ENCODE measurements at regions of chr13 and their contacts with region 1.

Region 1: GRCh38 chr13:76903544-76904162 is 17.4 kb upstream of the KCTD12 start:
- DNase-seq: peak; percentile 27 to 70
- ATAC-seq: peak in 7 of 8 donors; percentile 73 to 88 (median 83)
- H3K4me3 ChIP-seq: no peak overlapping the region
- H3K27ac ChIP-seq: no peak overlapping the region
- H3K4me1 ChIP-seq: peaks cover 0 to 4% (median 0%) of the 10 kb centered on the region in 9 donors
- H3K27me3 ChIP-seq: peaks cover 0 to 4% (median 0%) of the 10 kb centered on the region in 7 donors
- CTCF ChIP-seq: peak; percentile 92 to 100 (median 99)

Region 2: DNA sequence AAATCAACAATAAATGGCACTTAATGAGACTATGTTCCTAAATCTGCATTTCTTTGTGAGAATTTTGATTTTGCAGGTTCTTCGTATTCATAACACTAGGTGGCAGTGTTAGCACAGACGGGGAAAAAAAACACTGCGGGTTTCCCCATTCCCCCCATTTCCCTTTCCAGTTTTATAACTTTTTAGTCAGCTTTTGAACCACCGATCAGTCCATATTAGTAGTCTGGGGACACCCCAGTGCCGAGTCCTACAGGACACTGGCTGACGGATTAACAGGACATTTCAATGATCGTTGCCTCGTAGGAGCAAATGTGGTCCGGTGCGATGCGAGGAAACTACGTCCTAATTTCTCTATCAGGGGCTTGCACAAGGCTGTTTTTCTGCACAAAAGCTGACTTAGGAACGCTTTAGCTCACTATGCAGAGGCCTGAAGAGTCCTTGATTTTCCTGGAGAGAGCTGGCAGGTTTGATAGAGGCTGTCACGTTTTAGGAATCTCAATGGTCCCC is 1033.2 kb before region 1 on chr13:
- intact Hi-C with region 1: loop called in 9 of 10 experiments (anchors 2 to 10 kb)
- DNase-seq: no peak
- ATAC-seq: peak in 4 of 8 donors; percentile 21 to 43 (median 26)
- H3K4me3 ChIP-seq: peak overlapping the region in 9 of 10 donors; percentile 28 to 56 (median 39)
- H3K27ac ChIP-seq: peak overlapping the region in 1 of 10 donors; percentile 32
- H3K4me1 ChIP-seq: no peaks in the 10 kb centered on the region
- H3K27me3 ChIP-seq: peaks cover 0 to 4% (median 0%) of the 10 kb centered on the region in 7 donors
- CTCF ChIP-seq: peak; percentile 54 to 83 (median 78)

Region 3: DNA sequence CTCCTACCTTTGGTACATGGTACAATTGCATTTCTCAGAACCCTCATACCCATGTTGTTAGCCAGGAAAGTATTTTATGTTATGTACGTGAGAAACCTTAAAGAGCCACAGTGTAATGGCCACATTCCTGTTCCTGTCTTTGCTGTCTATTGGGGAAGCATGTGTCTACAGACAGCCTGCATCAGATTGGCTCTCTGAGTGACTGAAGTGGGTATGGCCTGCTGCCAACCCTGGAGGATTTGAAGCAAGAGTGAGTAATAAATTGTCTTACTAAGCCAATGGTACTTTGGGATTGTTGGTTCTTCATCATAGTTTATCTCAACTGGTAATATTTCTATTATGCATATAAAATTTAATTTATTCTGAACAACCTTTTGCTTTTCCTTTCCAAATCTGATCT is 693.4 kb before region 1 on chr13:
- intact Hi-C with region 1: loop called in 1 of 10 experiments (anchors 10 kb)
- DNase-seq: peak; percentile 27 to 31
- ATAC-seq: peak in 3 of 8 donors; percentile 58 to 74 (median 68)
- H3K4me3 ChIP-seq: no peak overlapping the region
- H3K27ac ChIP-seq: no peak overlapping the region
- H3K4me1 ChIP-seq: no peaks in the 10 kb centered on the region
- H3K27me3 ChIP-seq: no peaks in the 10 kb centered on the region
- CTCF ChIP-seq: no peak

Region 4: DNA sequence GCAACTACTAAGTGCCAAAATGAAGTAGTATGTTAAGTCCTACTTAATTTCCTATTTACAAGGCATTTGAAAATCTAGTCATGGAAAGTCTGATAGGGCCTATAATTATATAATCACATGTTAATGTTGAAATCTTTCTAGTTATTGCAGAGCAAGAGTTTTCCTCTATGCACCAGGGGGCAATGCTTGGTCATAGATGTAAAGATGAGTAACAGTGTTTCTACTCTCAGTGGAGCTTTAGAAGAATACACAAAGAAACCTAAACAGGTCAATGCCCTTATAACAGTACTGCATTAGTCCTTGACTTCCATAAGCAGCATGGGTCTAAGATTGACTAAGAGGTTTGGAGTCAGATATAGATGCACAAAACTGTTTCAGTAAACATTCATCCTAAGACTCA is 236.1 kb before region 1 on chr13:
- intact Hi-C with region 1: loop called (anchors 1 to 10 kb)
- DNase-seq: peak in 1 of 2 donors; percentile 32
- ATAC-seq: peak in 7 of 8 donors; percentile 62 to 83 (median 72)
- H3K4me3 ChIP-seq: no peak overlapping the region
- H3K27ac ChIP-seq: no peak overlapping the region
- H3K4me1 ChIP-seq: peaks cover 0 to 17% (median 0%) of the 10 kb centered on the region in 9 donors
- H3K27me3 ChIP-seq: no peaks in the 10 kb centered on the region
- CTCF ChIP-seq: peak in 8 of 9 donors; percentile 18 to 66 (median 52)